K562 (cell line): ENCODE measurements at regions of chr1 and their contacts with region 1.

Region 1: DNA sequence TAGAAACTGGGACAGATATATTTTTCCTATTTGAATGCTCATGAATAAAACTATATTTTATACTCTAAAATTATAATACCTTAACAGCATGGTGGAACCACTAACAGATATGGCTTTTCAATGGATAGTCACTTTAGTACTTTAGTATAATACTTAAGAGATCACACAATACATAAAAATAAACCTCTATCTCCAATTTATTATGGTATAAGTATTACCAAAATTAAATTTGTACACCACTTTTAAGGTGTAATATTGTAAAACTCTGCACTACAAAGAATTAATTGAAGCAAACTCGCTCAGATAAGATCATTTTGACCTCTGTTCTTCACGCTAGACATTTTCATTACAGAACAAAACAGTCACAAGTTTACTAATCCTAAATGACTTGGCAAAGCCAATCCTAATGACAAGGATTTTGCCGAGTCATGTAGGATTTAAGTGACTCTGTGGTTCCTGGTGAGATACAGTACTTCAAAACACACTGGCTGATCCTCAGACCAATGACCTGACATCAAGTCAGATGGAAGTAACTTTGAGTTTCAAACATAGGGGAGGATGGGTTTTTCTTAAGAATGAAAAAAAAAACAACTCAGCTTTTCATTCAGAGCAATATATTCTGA is 200.6 kb downstream of the SMYD3 start:
- DNase-seq: peak; percentile 29 to 91 (median 55)
- ATAC-seq: peak; percentile 90
- H3K4me3 ChIP-seq: no peak overlapping the region
- H3K27ac ChIP-seq: peak overlapping the region; percentile 82
- H3K4me1 ChIP-seq: peaks cover 3 to 39% of the 10 kb centered on the region in 2 experiments
- H3K27me3 ChIP-seq: no peaks in the 10 kb centered on the region
- CTCF ChIP-seq: no peak
- EP300 ChIP-seq: peak; percentile 89
- POLR2A ChIP-seq: no peak
- RAD21 ChIP-seq: peak in 1 of 2 experiments; percentile 2; a peak in 1 of 4 replicates

Region 2: DNA sequence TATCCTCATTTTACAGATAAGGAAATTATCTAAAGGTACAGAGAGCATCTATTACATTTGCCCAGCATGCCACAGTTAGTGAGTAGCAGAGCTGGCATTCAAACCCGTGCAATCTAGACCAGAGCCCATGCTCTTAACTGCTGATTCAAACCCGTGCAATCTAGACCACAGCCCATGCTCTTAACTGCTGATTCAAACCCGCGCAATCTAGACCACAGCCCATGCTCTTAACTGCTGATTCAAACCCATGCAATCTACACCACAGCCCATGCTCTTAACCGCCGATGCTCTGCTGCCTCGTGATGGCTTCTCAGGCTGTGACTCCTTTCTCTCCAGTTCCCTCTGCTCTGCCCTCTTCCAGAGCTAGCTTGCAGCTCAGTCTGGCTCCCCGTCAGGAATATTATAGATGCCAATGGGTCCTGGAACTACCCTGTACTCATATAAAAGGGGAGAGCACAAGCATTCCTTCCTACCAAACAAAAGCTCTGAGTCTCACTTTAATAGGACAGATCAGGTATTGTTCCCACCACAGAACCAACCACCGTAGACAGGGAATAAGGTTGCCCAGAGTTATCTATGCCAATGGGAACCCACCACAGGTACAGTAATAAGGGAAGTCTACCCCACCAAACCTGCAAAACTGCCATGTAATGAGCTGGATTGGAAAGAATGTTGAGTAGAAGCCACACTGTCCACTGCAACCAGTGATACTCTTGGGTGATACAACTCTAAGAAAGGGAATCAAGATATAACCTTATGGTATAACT is 122.2 kb after region 1 on chr1:
- CTCF ChIA-PET with region 1: no interaction called
- POLR2A ChIA-PET with region 1: no interaction called
- in situ Hi-C with region 1: no loop called
- intact Hi-C with region 1: loop called (anchors 5 kb)
- DNase-seq: peak in 2 of 4 experiments; percentile 42 to 80
- ATAC-seq: peak; percentile 88
- H3K4me3 ChIP-seq: no peak overlapping the region
- H3K27ac ChIP-seq: peak overlapping the region; percentile 56
- H3K4me1 ChIP-seq: peaks cover 7 to 27% of the 10 kb centered on the region in 2 experiments; a peak in 4 of 5 replicates
- H3K27me3 ChIP-seq: no peaks in the 10 kb centered on the region
- CTCF ChIP-seq: no peak
- EP300 ChIP-seq: peak; percentile 87
- POLR2A ChIP-seq: no peak
- RAD21 ChIP-seq: no peak

Region 3: DNA sequence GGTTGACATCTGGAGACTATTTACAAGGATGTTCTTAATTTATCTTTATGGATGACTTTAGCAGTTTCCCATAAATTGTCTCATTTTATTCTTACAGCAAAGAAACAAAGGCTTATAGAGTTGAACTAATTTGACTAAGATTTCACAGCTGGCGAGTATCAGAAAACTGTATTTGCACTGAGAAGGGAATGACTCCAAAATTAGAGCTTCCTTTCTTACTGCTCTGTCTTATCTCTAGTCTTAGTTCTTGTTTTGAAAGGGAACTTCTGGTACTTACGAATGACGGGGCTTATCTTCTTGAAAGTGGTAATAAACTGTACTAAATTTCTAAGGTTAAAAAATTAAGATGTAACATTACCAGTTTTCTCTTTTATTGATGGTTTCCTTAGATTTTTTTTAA is 273.3 kb after region 1 on chr1:
- CTCF ChIA-PET with region 1: no interaction called
- POLR2A ChIA-PET with region 1: no interaction called
- in situ Hi-C with region 1: no loop called
- intact Hi-C with region 1: loop called (anchors 10 kb)
- DNase-seq: peak in 2 of 4 experiments; percentile 51 to 65
- ATAC-seq: peak; percentile 36
- H3K4me3 ChIP-seq: no peak overlapping the region
- H3K27ac ChIP-seq: peak overlapping the region; percentile 89
- H3K4me1 ChIP-seq: peaks cover 36 to 75% of the 10 kb centered on the region in 2 experiments
- H3K27me3 ChIP-seq: no peaks in the 10 kb centered on the region
- CTCF ChIP-seq: no peak
- EP300 ChIP-seq: peak; percentile 71; the same call in 1 of the 2 replicates
- POLR2A ChIP-seq: no peak
- RAD21 ChIP-seq: no peak